Caco-2 (cell line): ENCODE measurements at regions of chr7 and their contacts with region 1.

Region 1: DNA sequence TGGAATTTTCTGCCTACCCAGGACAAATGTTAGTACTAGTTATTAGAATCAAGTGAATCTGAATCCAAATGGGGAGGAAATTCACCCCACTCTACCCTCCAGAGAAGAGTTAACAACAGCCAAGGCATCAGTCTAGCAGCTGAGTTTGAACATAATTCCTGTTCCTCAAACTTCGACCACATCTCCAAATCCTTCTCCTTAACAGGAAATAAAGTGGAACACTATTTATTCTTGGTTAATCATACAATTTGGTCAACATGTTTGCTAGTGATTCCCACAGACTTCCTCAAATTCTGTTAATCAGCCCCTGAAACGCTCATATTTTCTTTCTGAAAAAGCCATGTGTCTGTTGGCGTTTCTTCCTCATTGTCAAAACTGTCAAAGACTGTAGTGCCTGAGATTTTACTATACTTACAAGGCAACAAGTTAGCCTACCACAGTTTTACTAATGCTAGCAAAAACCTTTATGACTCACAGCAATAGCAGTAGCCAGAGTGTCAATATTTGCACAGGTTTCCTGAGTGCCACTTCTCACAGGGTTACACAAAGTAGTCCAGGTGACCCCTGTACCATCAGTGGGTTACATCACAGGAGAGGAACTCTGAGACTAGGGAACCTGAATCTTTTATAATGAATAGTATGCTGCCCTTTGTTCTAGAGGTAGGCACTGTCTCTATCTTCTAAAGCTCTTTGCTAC is 202.9 kb downstream of the GRM3 start:
- DNase-seq: peak; percentile 83 to 88
- H3K4me3 ChIP-seq: no peak overlapping the region
- H3K4me3 Mint-ChIP-seq: peak overlapping the region; percentile 59
- H3K27ac Mint-ChIP-seq: peak overlapping the region; percentile 80
- H3K4me1 ChIP-seq: peaks cover 58% of the 10 kb centered on the region
- H3K4me1 Mint-ChIP-seq: peaks cover 44% of the 10 kb centered on the region
- H3K27me3 ChIP-seq: no peaks in the 10 kb centered on the region
- H3K27me3 Mint-ChIP-seq: no peaks in the 10 kb centered on the region
- CTCF ChIP-seq: no peak

Region 2: GRCh38 chr7:86643561-86644281 is 202.9 kb before region 1 on chr7 and contains the start of gene GRM3:
- CTCF ChIA-PET with region 1: no interaction called
- POLR2A ChIA-PET with region 1: no interaction called
- intact Hi-C with region 1: no loop called
- DNase-seq: peak in 1 of 2 experiments; percentile 33
- H3K4me3 ChIP-seq: no peak within 1 kb of the TSS
- H3K4me3 Mint-ChIP-seq: no peak within 1 kb of the TSS
- H3K27ac Mint-ChIP-seq: no peak within 1 kb of the TSS
- H3K4me1 ChIP-seq: no peaks in the 10 kb centered on the region
- H3K4me1 Mint-ChIP-seq: peaks cover 4% of the 10 kb centered on the region
- H3K27me3 ChIP-seq: no peaks in the 10 kb centered on the region
- H3K27me3 Mint-ChIP-seq: peaks cover 2% of the 10 kb centered on the region
- CTCF ChIP-seq: no peak
- total RNA-seq, gene GRM3: not detected in 2 replicates

Region 3: DNA sequence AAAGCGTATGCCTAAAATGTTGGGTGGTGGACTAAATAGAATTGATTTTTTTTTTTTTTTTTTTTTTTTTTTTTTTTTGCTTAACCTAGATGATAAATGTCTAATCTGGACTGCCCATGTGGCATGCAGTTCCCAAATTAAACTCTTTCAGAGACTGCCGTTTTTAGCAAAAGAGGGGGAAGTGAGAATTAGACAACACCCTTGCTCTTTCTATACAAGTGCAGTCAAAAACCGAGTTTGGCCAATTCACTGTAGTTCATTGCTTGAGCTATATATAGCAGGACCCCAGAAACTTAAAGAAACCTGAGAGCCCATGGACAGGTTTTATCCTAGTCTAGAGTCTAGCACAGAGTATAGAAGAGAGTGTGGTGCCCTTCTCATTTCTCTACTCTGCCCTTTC is 61.0 kb before region 1 on chr7:
- CTCF ChIA-PET with region 1: no interaction called
- POLR2A ChIA-PET with region 1: no interaction called
- intact Hi-C with region 1: no loop called
- DNase-seq: no peak
- H3K4me3 ChIP-seq: no peak overlapping the region
- H3K4me3 Mint-ChIP-seq: no peak overlapping the region
- H3K27ac Mint-ChIP-seq: no peak overlapping the region
- H3K4me1 ChIP-seq: no peaks in the 10 kb centered on the region
- H3K4me1 Mint-ChIP-seq: no peaks in the 10 kb centered on the region
- H3K27me3 ChIP-seq: no peaks in the 10 kb centered on the region
- H3K27me3 Mint-ChIP-seq: peaks cover 8% of the 10 kb centered on the region
- CTCF ChIP-seq: no peak

Region 4: DNA sequence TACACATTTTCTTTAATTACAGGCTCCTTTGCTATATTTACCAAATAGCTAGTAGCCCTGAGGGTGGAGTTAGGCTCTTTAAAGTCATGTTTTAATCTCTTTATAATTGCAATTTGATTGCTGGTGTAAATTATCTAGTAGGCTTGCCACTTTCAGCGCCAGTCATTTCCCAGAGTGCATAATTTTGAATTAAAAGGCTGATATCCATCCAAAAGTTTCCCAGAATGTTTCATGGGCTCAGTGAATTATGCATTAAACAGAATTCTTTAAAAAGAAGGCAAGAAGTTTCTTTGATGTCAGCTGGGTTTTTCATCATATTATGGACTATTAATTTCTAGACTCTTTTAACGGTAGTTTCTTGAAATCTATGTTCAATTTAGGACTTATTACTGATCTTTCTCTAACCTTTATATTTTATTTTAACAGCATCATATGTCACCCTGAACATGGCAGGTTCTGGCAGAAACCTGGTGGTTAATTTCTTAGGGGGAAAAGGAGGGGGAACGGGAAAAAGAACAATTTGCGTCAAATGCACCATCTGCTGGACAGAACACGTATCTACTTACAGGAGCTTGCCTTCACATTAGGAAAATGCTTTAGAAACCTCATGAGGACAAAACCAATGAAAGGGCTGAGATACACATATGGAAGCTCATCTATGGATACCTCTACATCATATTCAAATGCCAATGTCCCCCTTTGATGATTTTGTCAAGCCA is 31.8 kb before region 1 on chr7:
- CTCF ChIA-PET with region 1: no interaction called
- POLR2A ChIA-PET with region 1: no interaction called
- intact Hi-C with region 1: loop called (anchors 1 kb)
- DNase-seq: peak in 1 of 2 experiments; percentile 32
- H3K4me3 ChIP-seq: no peak overlapping the region
- H3K4me3 Mint-ChIP-seq: no peak overlapping the region
- H3K27ac Mint-ChIP-seq: no peak overlapping the region
- H3K4me1 ChIP-seq: no peaks in the 10 kb centered on the region
- H3K4me1 Mint-ChIP-seq: no peaks in the 10 kb centered on the region
- H3K27me3 ChIP-seq: no peaks in the 10 kb centered on the region
- H3K27me3 Mint-ChIP-seq: no peaks in the 10 kb centered on the region
- CTCF ChIP-seq: peak; percentile 51 to 61

Region 5: GRCh38 chr7:86826575-86827347 is 19.9 kb before region 1 on chr7:
- CTCF ChIA-PET with region 1: interaction called, 3 read pairs
- POLR2A ChIA-PET with region 1: no interaction called
- intact Hi-C with region 1: loop called (anchors 1 kb)
- DNase-seq: peak; percentile 30 to 43
- H3K4me3 ChIP-seq: no peak overlapping the region
- H3K4me3 Mint-ChIP-seq: no peak overlapping the region
- H3K27ac Mint-ChIP-seq: no peak overlapping the region
- H3K4me1 ChIP-seq: peaks cover 19% of the 10 kb centered on the region
- H3K4me1 Mint-ChIP-seq: peaks cover 15% of the 10 kb centered on the region
- H3K27me3 ChIP-seq: no peaks in the 10 kb centered on the region
- H3K27me3 Mint-ChIP-seq: no peaks in the 10 kb centered on the region
- CTCF ChIP-seq: no peak

Region 6: GRCh38 chr7:86833360-86833759 is 13.3 kb before region 1 on chr7:
- CTCF ChIA-PET with region 1: interaction called, 3 read pairs
- POLR2A ChIA-PET with region 1: no interaction called
- intact Hi-C with region 1: loop called (anchors 1 kb)
- DNase-seq: no peak
- H3K4me3 ChIP-seq: no peak overlapping the region
- H3K4me3 Mint-ChIP-seq: no peak overlapping the region
- H3K27ac Mint-ChIP-seq: no peak overlapping the region
- H3K4me1 ChIP-seq: peaks cover 15% of the 10 kb centered on the region
- H3K4me1 Mint-ChIP-seq: peaks cover 13% of the 10 kb centered on the region
- H3K27me3 ChIP-seq: no peaks in the 10 kb centered on the region
- H3K27me3 Mint-ChIP-seq: no peaks in the 10 kb centered on the region
- CTCF ChIP-seq: no peak

Region 7: DNA sequence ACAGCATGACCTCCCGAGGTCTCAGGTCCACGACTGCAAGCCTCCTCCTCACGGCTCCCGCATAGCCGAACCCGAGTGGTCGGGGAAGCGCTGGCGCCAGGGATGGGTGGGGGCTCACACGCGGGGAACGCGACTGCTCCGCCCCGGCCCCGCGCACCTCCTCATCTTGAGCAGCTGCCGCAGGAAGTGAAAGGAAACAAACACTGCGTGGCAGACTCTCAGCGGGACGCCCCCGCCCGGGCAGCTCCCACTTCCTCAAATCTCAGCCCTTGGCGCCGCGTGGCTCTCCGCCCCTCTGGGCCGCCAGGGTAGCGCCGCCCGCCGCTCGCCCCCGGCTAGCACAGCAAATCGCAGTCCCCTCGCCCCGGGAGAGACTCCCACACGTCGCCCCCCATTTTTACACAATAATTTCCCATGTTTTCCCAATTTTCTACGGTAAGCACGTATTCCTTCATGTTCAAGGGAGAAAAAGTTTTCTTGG is 372.9 kb after region 1 on chr7 and contains the start of gene TMEM243:
- CTCF ChIA-PET with region 1: no interaction called
- POLR2A ChIA-PET with region 1: no interaction called
- intact Hi-C with region 1: loop called (anchors 10 kb)
- DNase-seq: peak; percentile 64 to 66
- H3K4me3 ChIP-seq: peak within 1 kb of the TSS; percentile 66
- H3K4me3 Mint-ChIP-seq: peak within 1 kb of the TSS; percentile 97
- H3K27ac Mint-ChIP-seq: peak within 1 kb of the TSS; percentile 74
- H3K4me1 ChIP-seq: peaks cover 5% of the 10 kb centered on the region
- H3K4me1 Mint-ChIP-seq: peaks cover 8% of the 10 kb centered on the region
- H3K27me3 ChIP-seq: no peaks in the 10 kb centered on the region
- H3K27me3 Mint-ChIP-seq: no peaks in the 10 kb centered on the region
- CTCF ChIP-seq: peak; percentile 22 to 26
- total RNA-seq, gene TMEM243: 24.2 and 28.6 TPM in 2 replicates